Activated CD4-positive, alpha-beta T cell treated with anti-CD3 and anti-CD28 coated beads, Interleukin-2, amount 10 ng/mL, durations not matched to agents 24 days and 14 days (primary cell): ENCODE measurements at regions of chr10 and their contacts with region 1.

Region 1: DNA sequence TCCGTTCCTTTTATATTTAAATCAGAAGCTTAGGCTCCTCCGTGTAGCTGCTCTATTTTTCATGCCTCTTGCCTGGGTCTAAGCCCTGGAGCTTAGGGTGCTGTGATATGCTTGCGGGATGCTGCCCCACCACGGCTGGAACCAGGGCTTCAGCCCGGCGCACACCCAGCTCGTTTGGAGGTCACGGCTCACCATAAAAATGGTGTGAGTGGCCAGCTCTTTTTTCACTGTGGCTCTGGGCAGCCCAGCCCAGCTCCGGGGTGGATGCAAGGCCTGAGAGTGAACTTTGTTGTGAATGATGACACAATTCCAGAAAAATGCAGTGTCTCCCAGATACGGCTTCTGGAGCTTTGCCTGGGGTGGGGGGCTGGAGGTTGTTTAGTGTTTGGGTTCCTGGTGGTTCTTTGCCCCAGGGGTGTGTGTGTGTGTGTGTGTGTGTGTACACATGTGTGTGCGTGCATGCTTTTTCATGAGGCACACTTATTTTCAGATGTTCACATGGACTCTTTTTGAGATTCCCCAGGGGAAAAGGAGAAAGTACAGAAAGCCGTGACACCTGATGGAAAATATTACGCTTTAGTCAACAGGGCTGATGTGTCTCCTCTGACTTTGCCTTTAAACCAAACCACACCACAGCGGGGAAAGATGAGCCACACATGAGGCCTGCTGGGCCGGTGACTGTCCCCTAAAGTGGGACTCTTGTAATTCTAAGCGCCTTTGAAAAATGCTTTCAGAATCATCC is 46.2 kb downstream of the GRK5 start:
- DNase-seq: peak; percentile 74
- H3K4me3 Mint-ChIP-seq: peak overlapping the region; percentile 24
- H3K27ac Mint-ChIP-seq: peak overlapping the region; percentile 92
- H3K4me1 Mint-ChIP-seq: peaks cover 44% of the 10 kb centered on the region
- H3K27me3 Mint-ChIP-seq: no peaks in the 10 kb centered on the region

Region 2: DNA sequence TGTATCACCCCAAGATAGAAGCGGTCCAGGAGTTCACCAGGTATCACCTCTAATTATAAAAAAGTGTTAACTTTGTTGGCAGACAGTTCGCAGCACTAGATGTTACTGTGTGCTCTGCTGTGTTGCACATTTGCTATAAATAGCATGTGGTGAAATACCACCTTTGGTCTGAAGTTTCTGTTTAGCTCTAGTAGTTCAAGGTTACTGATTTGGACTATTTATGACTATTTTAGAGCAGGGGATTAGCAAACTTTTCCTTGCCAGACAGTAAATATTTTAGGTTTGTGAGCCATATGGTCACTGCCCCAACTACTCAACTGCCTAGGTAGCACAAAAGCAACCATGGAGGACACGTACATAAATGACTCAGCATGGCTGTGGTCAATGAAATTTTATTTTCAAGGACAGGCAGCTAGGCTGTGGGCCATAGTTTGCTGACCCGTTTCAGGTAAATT is 133.2 kb before region 1 on chr10:
- intact Hi-C with region 1: no loop called
- DNase-seq: no peak
- H3K4me3 Mint-ChIP-seq: no peak overlapping the region
- H3K27ac Mint-ChIP-seq: peak overlapping the region; percentile 15
- H3K4me1 Mint-ChIP-seq: peaks cover 3% of the 10 kb centered on the region
- H3K27me3 Mint-ChIP-seq: no peaks in the 10 kb centered on the region

Region 3: DNA sequence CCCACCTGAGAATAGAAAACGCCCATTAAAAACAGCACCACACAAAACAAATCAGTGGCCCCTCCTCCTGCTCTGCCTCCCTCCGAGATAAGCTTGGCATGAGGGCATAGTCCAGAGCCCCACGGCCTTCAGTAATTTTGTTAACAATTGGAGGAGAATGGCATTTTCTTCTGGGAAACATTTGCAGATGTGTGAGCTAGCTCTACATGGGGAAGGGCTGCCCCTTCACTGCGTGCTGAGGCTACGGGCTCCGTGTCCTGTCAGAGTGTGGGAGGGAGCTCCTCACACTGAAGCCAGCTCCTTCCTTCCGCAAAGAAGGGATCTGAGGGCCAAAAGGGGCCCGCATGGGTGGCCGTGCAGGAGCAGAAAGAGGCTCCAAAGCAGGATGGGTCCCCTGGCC is 31.1 kb before region 1 on chr10:
- intact Hi-C with region 1: loop called (anchors 2 kb)
- DNase-seq: no peak
- H3K4me3 Mint-ChIP-seq: no peak overlapping the region
- H3K27ac Mint-ChIP-seq: peak overlapping the region; percentile 32
- H3K4me1 Mint-ChIP-seq: peaks cover 28% of the 10 kb centered on the region
- H3K27me3 Mint-ChIP-seq: no peaks in the 10 kb centered on the region

Region 4: DNA sequence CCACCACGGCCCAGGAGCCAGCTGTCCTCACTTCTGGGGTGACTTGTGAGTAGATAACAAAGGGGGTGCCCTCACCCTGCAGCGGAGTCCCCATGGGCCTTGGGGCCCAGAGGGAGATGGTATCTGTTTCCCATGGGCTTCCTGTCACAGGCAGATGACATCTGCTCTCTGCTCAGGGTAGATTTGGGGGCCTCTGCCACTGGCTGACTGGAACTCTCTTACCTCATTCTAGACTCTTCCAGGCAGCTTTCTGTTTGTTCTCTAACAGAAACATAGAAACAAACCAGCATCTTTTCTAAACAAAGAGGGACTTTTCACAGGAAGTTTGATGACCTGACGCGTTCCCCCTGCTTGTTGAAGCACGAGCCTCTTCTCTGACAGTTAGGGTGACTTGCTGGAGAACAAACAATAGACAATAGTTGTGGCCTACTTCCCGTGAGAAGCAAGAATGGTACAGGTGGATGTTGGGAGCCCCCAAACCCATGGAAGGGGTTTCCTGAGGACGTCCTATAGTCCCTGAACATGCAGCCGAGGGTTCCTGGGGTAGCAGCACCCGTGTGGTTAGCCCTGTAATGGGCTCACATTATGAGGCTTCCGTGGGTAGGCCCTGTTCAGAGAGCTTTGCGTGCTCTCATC is 15.4 kb after region 1 on chr10:
- intact Hi-C with region 1: loop called (anchors 1 kb)
- DNase-seq: peak; percentile 95
- H3K4me3 Mint-ChIP-seq: peak overlapping the region; percentile 75
- H3K27ac Mint-ChIP-seq: peak overlapping the region; percentile 99
- H3K4me1 Mint-ChIP-seq: peaks cover 60% of the 10 kb centered on the region
- H3K27me3 Mint-ChIP-seq: no peaks in the 10 kb centered on the region

Region 5: GRCh38 chr10:119289227-119289920 is 35.8 kb after region 1 on chr10:
- intact Hi-C with region 1: loop called (anchors 5 kb)
- DNase-seq: no peak
- H3K4me3 Mint-ChIP-seq: peak overlapping the region; percentile 55
- H3K27ac Mint-ChIP-seq: peak overlapping the region; percentile 85
- H3K4me1 Mint-ChIP-seq: peaks cover 79% of the 10 kb centered on the region
- H3K27me3 Mint-ChIP-seq: no peaks in the 10 kb centered on the region

Region 6: GRCh38 chr10:119315128-119316001 is 61.8 kb after region 1 on chr10:
- intact Hi-C with region 1: loop called (anchors 2 kb)
- DNase-seq: peak; percentile 89
- H3K4me3 Mint-ChIP-seq: peak overlapping the region; percentile 38
- H3K27ac Mint-ChIP-seq: peak overlapping the region; percentile 91
- H3K4me1 Mint-ChIP-seq: peaks cover 56% of the 10 kb centered on the region
- H3K27me3 Mint-ChIP-seq: peaks cover 4% of the 10 kb centered on the region

Region 7: GRCh38 chr10:119355930-119356329 is 102.3 kb after region 1 on chr10:
- intact Hi-C with region 1: no loop called
- DNase-seq: no peak
- H3K4me3 Mint-ChIP-seq: no peak overlapping the region
- H3K27ac Mint-ChIP-seq: no peak overlapping the region
- H3K4me1 Mint-ChIP-seq: peaks cover 11% of the 10 kb centered on the region
- H3K27me3 Mint-ChIP-seq: no peaks in the 10 kb centered on the region